Transverse colon (tissue), 4 donors: ENCODE measurements at regions of chr14 and their contacts with region 1.

Region 1: GRCh38 chr14:67704484-67705089 is 2.9 kb downstream of the RDH12 start:
- DNase-seq: no peak
- H3K4me3 ChIP-seq: no peak overlapping the region
- H3K27ac ChIP-seq: no peak overlapping the region
- H3K4me1 ChIP-seq: no peaks in the 10 kb centered on the region
- H3K27me3 ChIP-seq: no peaks in the 10 kb centered on the region
- CTCF ChIP-seq: peak; percentile 59 to 70 (median 61)
- EP300 ChIP-seq: no peak
- POLR2A ChIP-seq: no peak

Region 2: GRCh38 chr14:67426983-67427606 is 277.5 kb before region 1 on chr14:
- in situ Hi-C with region 1: loop called in 1 of 4 experiments (anchors 25 kb)
- intact Hi-C with region 1: no loop called
- DNase-seq: peak; percentile 82
- H3K4me3 ChIP-seq: no peak overlapping the region
- H3K27ac ChIP-seq: no peak overlapping the region
- H3K4me1 ChIP-seq: peaks cover 5 to 15% (median 12%) of the 10 kb centered on the region in 4 donors
- H3K27me3 ChIP-seq: peaks cover 12% of the 10 kb centered on the region
- CTCF ChIP-seq: peak; percentile 79 to 90 (median 80)
- EP300 ChIP-seq: no peak
- POLR2A ChIP-seq: no peak

Region 3: DNA sequence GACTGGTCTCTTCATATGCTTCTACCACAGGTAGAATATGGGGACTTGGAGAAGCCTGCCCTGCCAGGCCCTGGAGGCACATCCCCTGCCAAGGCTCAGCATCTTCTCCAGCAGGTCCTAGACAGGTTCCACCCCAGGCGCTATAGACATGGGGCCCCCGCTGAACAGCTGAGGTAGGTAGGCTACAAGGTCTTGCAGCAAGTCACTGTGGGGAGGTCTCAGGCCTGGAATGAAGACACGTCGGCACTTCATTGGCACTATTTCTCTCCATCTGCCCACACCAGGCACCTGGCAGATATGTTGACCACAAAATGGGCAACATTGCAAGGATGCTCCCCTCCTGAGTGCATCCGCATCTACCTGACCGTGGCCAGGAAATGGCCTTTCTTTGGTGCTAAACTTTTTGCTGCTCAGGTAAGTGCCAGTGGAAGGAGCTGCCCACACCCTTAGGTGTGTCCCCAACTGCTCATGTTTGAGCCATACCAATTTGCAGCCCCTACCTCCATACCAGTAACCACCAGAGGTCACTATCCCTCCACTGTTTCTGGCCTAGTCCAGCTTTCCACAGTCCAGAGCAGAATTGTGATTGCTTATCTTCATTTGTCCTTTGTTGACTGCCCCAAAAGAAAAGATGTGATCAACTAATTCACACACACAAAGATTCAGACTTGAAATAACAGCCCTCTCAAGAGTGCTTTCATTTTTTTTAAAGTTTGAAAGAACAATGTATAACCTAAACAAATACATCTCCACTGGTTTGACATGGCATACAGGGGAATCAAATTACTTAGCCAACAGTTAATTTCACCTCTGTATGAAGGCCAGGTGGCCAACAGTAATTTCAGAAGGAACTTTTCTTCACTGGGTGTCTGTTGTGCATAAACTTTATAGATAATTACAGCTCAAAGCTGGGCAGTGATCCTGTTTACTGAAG is 120.6 kb before region 1 on chr14:
- in situ Hi-C with region 1: loop called in 2 of 4 experiments (anchors 10 kb)
- intact Hi-C with region 1: no loop called
- DNase-seq: peak; percentile 41
- H3K4me3 ChIP-seq: no peak overlapping the region
- H3K27ac ChIP-seq: no peak overlapping the region
- H3K4me1 ChIP-seq: no peaks in the 10 kb centered on the region
- H3K27me3 ChIP-seq: no peaks in the 10 kb centered on the region
- CTCF ChIP-seq: peak; percentile 46 to 61 (median 55)
- EP300 ChIP-seq: no peak
- POLR2A ChIP-seq: no peak

Region 4: GRCh38 chr14:67599698-67600561 is 104.7 kb before region 1 on chr14 and contains the start of gene PIGH:
- in situ Hi-C with region 1: loop called in 1 of 4 experiments (anchors 25 kb)
- intact Hi-C with region 1: loop called (anchors 10 kb)
- DNase-seq: peak; percentile 95
- H3K4me3 ChIP-seq: peak within 1 kb of the TSS; percentile 52 to 94 (median 64)
- H3K27ac ChIP-seq: peak within 1 kb of the TSS; percentile 86 to 97 (median 90)
- H3K4me1 ChIP-seq: peaks cover 3 to 15% (median 9%) of the 10 kb centered on the region in 4 donors
- H3K27me3 ChIP-seq: no peaks in the 10 kb centered on the region
- CTCF ChIP-seq: peak; percentile 51 to 75 (median 63)
- EP300 ChIP-seq: no peak
- POLR2A ChIP-seq: peak; percentile 90
- total RNA-seq, gene PIGH: 18.9 to 41.9 (median 27.7) TPM

Region 5: DNA sequence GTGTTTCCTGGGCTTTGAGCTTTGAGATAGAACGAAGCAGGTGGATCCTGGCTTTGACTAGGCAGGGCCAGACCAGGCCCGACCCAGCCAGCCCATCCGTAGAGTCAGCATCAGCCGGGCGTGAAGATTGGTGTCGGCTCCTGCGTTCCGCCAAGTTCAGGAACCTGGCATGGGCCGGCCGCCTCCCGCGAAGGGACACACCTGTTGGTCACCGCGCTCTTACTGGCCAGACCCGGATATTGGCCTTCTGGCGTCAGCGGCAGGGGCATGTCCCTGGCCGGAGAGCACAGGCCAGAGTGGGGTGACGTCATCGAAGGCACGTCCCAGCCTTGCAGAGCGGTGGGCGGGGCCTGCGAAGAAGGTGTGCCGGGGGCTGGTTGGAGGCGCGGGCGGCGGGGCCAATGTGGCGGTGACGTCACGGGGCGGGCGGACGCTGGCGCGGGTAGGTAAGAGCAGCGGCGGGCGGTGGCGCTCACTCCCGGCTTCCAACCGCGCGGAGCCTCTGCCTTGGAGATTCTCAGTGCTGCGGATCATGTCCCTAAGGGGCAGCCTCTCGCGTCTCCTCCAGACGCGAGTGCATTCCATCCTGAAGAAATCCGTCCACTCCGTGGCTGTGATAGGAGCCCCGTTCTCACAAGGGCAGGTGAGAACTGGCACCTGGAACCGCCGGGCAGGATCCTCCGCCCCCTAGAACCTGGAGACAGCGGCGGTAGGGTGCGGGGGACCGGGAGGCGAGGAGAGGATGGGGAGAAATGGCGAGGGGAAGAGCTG is 85.0 kb before region 1 on chr14 and contains the start of gene ARG2:
- in situ Hi-C with region 1: loop called in 1 of 4 experiments (anchors 25 kb)
- intact Hi-C with region 1: loop called (anchors 10 kb)
- DNase-seq: peak; percentile 100
- H3K4me3 ChIP-seq: peak within 1 kb of the TSS; percentile 35 to 69 (median 51)
- H3K27ac ChIP-seq: peak within 1 kb of the TSS; percentile 65 to 85 (median 81)
- H3K4me1 ChIP-seq: peaks cover 5 to 28% (median 18%) of the 10 kb centered on the region in 4 donors
- H3K27me3 ChIP-seq: no peaks in the 10 kb centered on the region
- CTCF ChIP-seq: peak in 1 of 5 experiments; percentile 27
- EP300 ChIP-seq: no peak
- POLR2A ChIP-seq: peak; percentile 86
- total RNA-seq, gene ARG2: 7.5 to 18.8 (median 9.2) TPM in 3 of 4 donors, not detected in the other